Mammary epithelial cell (primary cell): ENCODE measurements at regions of chr7 and their contacts with region 1.

Region 1: GRCh38 chr7:149422129-149422913 is 38.5 kb downstream of the ZNF777 start:
- DNase-seq: peak; percentile 64
- H3K4me3 ChIP-seq: peak overlapping the region; percentile 47 to 56 (median 50)
- H3K27ac ChIP-seq: no peak overlapping the region
- H3K4me1 ChIP-seq: peaks cover 4% of the 10 kb centered on the region
- H3K27me3 ChIP-seq: no peaks in the 10 kb centered on the region
- CTCF ChIP-seq: peak; percentile 49 to 66

Region 2: DNA sequence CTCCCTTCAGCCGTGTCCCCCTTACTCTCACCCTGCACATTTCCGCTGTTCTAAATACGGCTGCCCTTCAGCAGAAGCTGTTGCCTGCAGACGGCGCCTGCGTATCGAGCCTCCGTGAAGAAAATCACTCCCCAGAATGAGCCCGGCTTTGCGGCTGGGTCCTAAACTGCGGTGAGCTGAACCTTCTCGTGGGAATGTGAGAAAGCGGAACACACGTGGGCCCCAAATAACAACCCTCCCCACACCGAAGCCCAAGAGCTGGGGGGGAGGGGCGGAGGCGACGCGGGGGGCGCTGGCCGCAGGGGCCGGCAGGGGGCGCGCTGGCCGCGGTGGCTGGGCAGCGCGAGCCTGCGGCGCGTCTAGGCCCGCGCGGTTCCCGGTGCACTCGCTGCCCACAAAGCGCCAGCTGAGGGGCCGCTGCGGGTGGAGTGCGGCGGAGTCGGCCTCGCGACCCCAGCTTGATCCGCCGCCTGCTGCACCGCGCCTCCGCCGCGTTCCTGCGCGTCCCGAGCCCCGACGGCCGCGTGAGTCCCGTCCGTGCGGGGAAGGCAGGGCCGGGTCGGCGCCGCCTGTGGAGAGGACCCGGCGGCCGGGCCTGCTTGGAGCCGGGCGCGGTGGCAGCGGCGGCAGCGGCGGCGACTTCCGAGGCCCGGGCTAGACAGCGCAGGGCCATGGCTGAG is 275.1 kb before region 1 on chr7 and contains the start of gene ZNF398:
- CTCF ChIA-PET with region 1: no interaction called
- dilution Hi-C with region 1: no loop called
- in situ Hi-C with region 1: no loop called
- intact Hi-C with region 1: no loop called
- DNase-seq: peak; percentile 67
- H3K4me3 ChIP-seq: peak within 1 kb of the TSS; percentile 65 to 94 (median 89)
- H3K27ac ChIP-seq: peak within 1 kb of the TSS; percentile 26
- H3K4me1 ChIP-seq: peaks cover 22% of the 10 kb centered on the region
- H3K27me3 ChIP-seq: no peaks in the 10 kb centered on the region
- CTCF ChIP-seq: peak; percentile 24 to 53
- total RNA-seq, gene ZNF398: 16.0 to 26.2 TPM

Region 3: DNA sequence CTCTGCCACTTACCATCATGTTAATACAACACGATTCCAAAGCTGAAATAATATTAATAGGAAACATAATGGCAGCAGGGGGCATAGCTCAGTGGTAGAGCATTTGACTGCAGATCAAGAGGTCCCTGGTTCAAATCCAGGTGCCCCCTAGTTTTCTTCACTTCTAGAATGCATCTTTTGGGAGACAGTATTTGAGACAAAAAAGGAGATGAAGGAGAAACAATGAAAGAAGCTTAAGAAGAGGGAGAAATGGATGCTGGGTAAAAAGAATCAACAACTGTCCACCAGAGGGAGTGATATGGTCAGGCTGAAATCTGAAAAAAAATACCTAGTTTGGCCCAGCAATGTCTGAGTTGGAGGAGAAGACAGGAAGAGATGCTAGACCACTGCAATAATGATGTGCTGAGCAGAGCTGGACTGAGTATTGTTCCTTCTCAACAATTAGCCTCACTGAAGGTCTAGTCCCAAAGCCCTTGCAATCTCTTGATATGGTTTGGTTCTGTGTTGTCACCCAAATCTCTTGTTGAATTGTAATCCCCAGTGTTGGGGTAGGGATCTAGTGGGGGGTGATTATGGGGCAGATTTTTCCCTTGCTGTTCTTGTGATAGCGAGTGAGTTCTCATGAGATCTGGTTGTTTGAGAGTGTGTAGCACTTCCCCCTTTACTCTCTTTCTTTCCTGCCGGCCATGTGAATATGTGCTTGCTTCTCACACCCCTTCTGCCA is 112.0 kb before region 1 on chr7:
- CTCF ChIA-PET with region 1: no interaction called
- dilution Hi-C with region 1: no loop called
- in situ Hi-C with region 1: no loop called
- intact Hi-C with region 1: loop called (anchors 1 kb)
- DNase-seq: peak; percentile 85
- H3K4me3 ChIP-seq: no peak overlapping the region
- H3K27ac ChIP-seq: no peak overlapping the region
- H3K4me1 ChIP-seq: no peaks in the 10 kb centered on the region
- H3K27me3 ChIP-seq: no peaks in the 10 kb centered on the region
- CTCF ChIP-seq: peak; percentile 63 to 71

Region 4: GRCh38 chr7:149377386-149377785 is 44.9 kb before region 1 on chr7:
- CTCF ChIA-PET with region 1: no interaction called
- dilution Hi-C with region 1: no loop called
- in situ Hi-C with region 1: no loop called
- intact Hi-C with region 1: no loop called
- DNase-seq: peak; percentile 10
- H3K4me3 ChIP-seq: no peak overlapping the region
- H3K27ac ChIP-seq: no peak overlapping the region
- H3K4me1 ChIP-seq: no peaks in the 10 kb centered on the region
- H3K27me3 ChIP-seq: no peaks in the 10 kb centered on the region
- CTCF ChIP-seq: no peak

Region 5: GRCh38 chr7:149468215-149468614 is 45.9 kb after region 1 on chr7:
- CTCF ChIA-PET with region 1: no interaction called
- dilution Hi-C with region 1: no loop called
- in situ Hi-C with region 1: no loop called
- intact Hi-C with region 1: no loop called
- DNase-seq: peak; percentile 70
- H3K4me3 ChIP-seq: no peak overlapping the region
- H3K27ac ChIP-seq: no peak overlapping the region
- H3K4me1 ChIP-seq: no peaks in the 10 kb centered on the region
- H3K27me3 ChIP-seq: no peaks in the 10 kb centered on the region
- CTCF ChIP-seq: no peak